Heart right ventricle (tissue), 16 donors: ENCODE measurements at regions of chrX and their contacts with region 1.

Region 1: GRCh38 chrX:72540318-72540717 is 32.3 kb downstream of the HDAC8 start:
- DNase-seq: no peak
- ATAC-seq: peak in 7 of 8 donors; percentile 36 to 79 (median 69)
- H3K4me3 ChIP-seq: no peak overlapping the region
- H3K27ac ChIP-seq: peak overlapping the region in 2 of 10 donors; percentile 10 to 48
- H3K4me1 ChIP-seq: peaks cover 0 to 32% (median 0%) of the 10 kb centered on the region in 9 donors
- H3K27me3 ChIP-seq: peaks cover 0 to 16% (median 0%) of the 10 kb centered on the region in 7 donors
- CTCF ChIP-seq: peak in 7 of 9 donors; percentile 25 to 60 (median 43)

Region 2: GRCh38 chrX:72003811-72004750 is 536.2 kb before region 1 on chrX:
- intact Hi-C with region 1: loop called in 1 of 10 experiments (anchors 10 kb)
- DNase-seq: peak; percentile 33 to 48
- ATAC-seq: peak; percentile 80 to 91 (median 85)
- H3K4me3 ChIP-seq: peak overlapping the region in 2 of 10 donors; percentile 5 to 11
- H3K27ac ChIP-seq: peak overlapping the region in 7 of 10 donors; percentile 14 to 74 (median 67)
- H3K4me1 ChIP-seq: peaks cover 0 to 20% (median 8%) of the 10 kb centered on the region in 9 donors
- H3K27me3 ChIP-seq: peaks cover 0 to 55% (median 0%) of the 10 kb centered on the region in 7 donors
- CTCF ChIP-seq: peak in 4 of 9 donors; percentile 14 to 32 (median 23)

Region 3: DNA sequence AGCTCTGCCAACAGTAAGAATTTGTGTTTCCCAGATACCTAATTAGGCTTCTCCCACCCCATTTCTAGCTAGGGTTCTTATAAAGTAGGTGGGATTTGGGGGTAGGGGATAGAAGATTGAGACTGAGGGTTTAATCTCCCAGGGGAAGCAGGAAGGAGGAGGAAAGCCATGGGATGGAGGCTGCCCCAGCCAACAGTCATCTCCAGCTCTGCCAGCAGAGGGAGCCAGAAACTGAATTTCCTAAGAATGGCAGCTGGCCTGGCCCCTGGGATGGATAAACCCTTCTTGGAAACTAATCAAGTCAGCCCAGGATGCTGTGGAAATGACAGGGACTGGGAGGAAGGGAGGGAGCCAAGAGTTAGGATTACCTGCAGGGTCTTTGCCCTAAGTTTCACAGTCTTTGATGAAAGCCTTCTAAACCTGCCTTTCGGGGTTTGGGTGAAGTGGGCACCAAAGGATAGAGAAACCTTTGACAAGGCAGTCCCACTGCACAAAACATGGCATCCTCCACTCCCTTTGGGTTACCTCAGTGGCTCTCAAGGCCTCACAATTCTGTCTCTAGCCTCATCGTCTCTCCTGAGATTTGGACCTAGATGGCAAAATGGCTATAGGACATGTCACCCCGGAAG is 294.7 kb before region 1 on chrX:
- intact Hi-C with region 1: loop called in 5 of 10 experiments (anchors 5 to 10 kb)
- DNase-seq: peak; percentile 4 to 27
- ATAC-seq: peak in 5 of 8 donors; percentile 51 to 81 (median 64)
- H3K4me3 ChIP-seq: no peak overlapping the region
- H3K27ac ChIP-seq: no peak overlapping the region
- H3K4me1 ChIP-seq: peaks cover 0 to 5% (median 0%) of the 10 kb centered on the region in 9 donors
- H3K27me3 ChIP-seq: peaks cover 0 to 4% (median 0%) of the 10 kb centered on the region in 7 donors
- CTCF ChIP-seq: peak; percentile 14 to 83 (median 56)

Region 4: DNA sequence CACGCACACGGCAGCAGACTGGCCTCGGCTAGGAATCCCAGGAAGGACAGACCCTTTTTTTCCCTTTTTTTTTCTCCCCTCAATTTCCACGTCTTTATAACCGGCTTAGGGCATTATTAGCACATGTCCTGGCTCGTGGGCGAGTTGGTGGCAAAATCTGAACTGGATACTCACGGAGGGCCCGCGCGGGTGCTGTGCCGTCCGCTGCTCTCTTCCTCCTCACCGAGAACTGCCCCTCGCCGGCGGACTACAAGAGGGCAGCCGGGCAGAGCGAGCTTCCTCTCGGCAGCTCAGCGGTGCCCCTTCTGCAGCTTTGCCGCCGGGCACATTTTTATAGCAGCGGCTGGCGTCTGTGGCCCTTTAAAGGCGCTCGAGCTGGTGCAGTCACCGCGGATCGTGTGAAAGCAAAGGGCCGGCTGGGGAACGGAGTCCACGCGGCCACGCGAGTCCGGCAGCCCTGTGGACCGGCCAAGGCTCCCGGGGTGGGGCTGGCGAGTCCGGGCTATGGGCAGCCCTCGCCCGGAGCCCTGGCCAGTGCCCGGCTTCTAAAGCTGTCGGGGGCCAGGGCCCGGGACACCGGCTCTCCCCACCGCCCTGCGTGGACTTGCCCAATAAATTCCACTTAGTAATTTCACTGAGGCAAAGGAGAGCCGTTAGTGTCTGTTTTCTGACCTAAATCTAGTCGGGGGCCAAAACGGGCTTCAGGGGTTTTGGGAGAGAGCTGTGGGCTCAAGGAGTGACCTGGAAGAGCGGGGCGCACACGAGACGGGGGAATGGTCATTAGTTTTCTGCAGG is 233.3 kb before region 1 on chrX:
- intact Hi-C with region 1: loop called in 4 of 10 experiments (anchors 5 to 10 kb)
- DNase-seq: peak; percentile 40 to 43
- ATAC-seq: peak; percentile 70 to 85 (median 79)
- H3K4me3 ChIP-seq: peak overlapping the region; percentile 38 to 66 (median 55)
- H3K27ac ChIP-seq: no peak overlapping the region
- H3K4me1 ChIP-seq: peaks cover 0 to 37% (median 19%) of the 10 kb centered on the region in 9 donors
- H3K27me3 ChIP-seq: peaks cover 0 to 99% (median 0%) of the 10 kb centered on the region in 7 donors
- CTCF ChIP-seq: no peak

Region 5: DNA sequence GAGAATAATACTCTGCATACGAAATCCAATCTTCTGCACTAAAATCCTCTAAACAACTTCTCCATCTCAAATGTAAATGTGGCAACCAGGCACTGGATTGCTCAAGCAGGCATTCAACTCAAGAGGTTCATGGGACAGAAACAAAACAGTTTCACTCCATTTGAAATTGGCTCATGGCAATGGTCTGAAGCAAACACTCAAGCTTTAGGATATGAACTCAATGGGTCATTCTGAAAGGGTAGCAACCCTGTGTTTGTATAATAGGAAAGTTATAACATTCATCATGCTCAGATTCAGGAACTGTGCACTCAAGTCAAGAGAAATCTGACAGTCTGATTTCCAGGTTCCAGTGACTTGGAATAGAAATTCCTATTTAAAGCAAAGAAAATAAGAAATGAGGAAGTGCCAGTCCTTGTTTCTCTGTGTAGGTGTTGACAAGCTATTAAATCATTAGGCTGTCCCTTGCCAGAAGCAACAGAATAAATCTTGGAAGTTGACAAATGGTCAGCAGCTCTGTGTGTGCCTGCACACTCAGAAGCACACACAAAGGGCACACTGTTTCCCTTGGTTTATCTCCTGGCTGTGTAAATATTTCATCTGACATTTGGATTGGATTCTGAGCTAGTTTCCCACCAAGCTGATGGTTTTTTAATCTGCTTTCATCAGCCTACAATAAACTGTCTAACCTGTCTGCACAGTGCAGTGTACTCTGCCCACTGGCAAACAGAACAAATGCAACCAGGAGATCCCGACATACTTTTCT is 158.7 kb before region 1 on chrX:
- intact Hi-C with region 1: loop called in 1 of 10 experiments (anchors 10 kb)
- DNase-seq: no peak
- ATAC-seq: peak; percentile 47 to 76 (median 58)
- H3K4me3 ChIP-seq: no peak overlapping the region
- H3K27ac ChIP-seq: peak overlapping the region in 1 of 10 donors; percentile 48
- H3K4me1 ChIP-seq: peaks cover 0 to 12% (median 0%) of the 10 kb centered on the region in 9 donors
- H3K27me3 ChIP-seq: peaks cover 0 to 19% (median 0%) of the 10 kb centered on the region in 7 donors
- CTCF ChIP-seq: no peak

Region 6: DNA sequence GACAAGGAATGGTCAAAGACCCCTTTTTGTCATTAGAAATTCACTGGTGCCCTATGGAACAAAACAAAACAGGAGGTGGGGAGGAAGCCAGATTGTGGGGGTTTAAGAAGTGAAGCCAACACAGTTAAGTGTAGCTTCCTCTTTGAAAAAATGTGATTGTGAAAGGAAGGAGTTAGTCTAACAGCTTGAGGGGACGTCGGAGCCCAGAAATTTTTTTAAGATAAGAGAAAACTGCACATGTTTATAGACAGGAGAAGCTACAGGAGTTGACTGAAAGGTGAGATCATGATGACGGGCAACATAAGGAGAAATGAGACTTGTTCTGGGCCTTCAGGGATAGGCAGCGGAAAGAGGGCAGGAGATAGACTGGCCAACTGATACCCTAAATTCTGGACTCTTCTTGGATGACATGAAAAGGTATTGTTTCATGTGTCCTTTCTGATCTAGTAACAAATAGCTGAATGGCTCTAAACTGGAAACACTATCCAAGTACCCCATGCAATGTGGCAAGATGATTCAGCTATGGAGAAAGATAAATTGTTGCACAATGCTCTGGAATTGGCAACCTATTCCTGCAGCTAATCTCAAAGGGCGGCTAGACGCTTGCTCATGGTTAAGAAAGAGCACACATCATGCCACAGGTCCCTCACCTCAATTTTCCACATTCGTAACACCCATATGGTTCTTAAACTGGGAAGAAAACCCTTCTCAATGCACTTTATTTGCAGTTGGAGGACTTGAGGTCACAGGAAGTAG is 36.0 kb after region 1 on chrX:
- intact Hi-C with region 1: no loop called
- DNase-seq: no peak
- ATAC-seq: peak in 1 of 8 donors; percentile 26
- H3K4me3 ChIP-seq: no peak overlapping the region
- H3K27ac ChIP-seq: no peak overlapping the region
- H3K4me1 ChIP-seq: peaks cover 0 to 9% (median 0%) of the 10 kb centered on the region in 9 donors
- H3K27me3 ChIP-seq: peaks cover 0 to 37% (median 0%) of the 10 kb centered on the region in 7 donors
- CTCF ChIP-seq: no peak